ENCODE measurements at regions of chr6 and their contacts with region 1.

Region 1: DNA sequence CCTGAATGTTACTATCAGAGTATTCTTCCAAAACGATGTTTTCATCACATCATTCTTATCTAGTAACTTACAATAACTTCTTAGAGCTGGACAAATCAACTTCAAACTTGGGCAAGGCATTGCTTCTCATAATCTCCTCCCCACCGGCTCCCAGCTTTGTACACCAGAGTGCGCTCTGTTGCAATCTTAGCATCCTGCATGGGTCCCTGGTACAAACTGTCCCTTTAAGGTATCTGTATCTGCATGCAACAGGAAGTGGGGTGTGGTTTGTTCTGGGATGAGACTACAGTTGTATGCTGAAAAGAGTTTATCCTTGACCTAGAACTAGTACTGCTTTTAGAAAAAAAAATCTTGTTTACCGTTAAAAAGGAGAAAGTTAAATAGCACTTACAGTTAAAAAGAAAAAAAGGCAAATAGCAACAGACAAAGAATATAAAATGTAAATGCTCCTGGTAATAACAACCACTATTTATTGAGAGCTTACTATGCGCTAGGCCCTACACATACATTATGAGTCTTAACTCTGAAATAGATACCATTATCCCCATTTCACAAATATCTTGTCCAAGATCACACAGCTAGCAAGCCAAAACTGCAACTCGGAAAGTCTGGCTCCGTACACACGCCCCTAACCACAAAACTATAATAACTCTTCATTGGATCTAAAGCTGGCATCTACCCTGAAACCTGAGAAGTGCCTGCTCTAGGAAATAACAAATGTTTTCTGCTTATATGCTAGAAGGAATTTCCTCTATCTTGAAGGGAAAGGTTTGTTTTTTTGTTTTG is 9.8 kb upstream of the HECA start:
- DNase-seq: peak; percentile 60 to 66 (median 60)
- ATAC-seq: peak; percentile 96 to 99 (median 98)
- H3K4me3 ChIP-seq: no peak overlapping the region
- H3K27ac ChIP-seq: peak overlapping the region in 5 of 12 donors; percentile 19 to 73 (median 35)
- H3K4me1 ChIP-seq: peaks cover 0 to 23% (median 4%) of the 10 kb centered on the region in 12 donors
- H3K27me3 ChIP-seq: no peaks in the 10 kb centered on the region
- CTCF ChIP-seq: peak; percentile 32 to 76 (median 59)
- POLR2A ChIP-seq: no peak

Region 2: GRCh38 chr6:138030872-138031271 is 1094.2 kb before region 1 on chr6:
- intact Hi-C with region 1: no loop called
- DNase-seq: no peak
- ATAC-seq: peak in 2 of 4 donors; percentile 25 to 46
- H3K4me3 ChIP-seq: no peak overlapping the region
- H3K27ac ChIP-seq: peak overlapping the region in 2 of 12 donors; percentile 45 to 59
- H3K4me1 ChIP-seq: peaks cover 0 to 13% (median 0%) of the 10 kb centered on the region in 12 donors
- H3K27me3 ChIP-seq: no peaks in the 10 kb centered on the region
- CTCF ChIP-seq: no peak
- POLR2A ChIP-seq: no peak

Region 3: GRCh38 chr6:139219271-139219729 is 94.2 kb after region 1 on chr6:
- intact Hi-C with region 1: loop called in 3 of 10 experiments (anchors 2 to 10 kb)
- DNase-seq: peak; percentile 85 to 90 (median 86)
- ATAC-seq: peak; percentile 98 to 100 (median 99)
- H3K4me3 ChIP-seq: no peak overlapping the region
- H3K27ac ChIP-seq: peak overlapping the region; percentile 30 to 79 (median 62)
- H3K4me1 ChIP-seq: peaks cover 0 to 15% (median 6%) of the 10 kb centered on the region in 12 donors
- H3K27me3 ChIP-seq: no peaks in the 10 kb centered on the region
- CTCF ChIP-seq: peak; percentile 64 to 91 (median 82)
- POLR2A ChIP-seq: peak in 1 of 2 donors; percentile 62

Measured in heart left ventricle (tissue), 16 donors.